ENCODE measurements at regions of chr7 and their contacts with region 1.

Region 1: GRCh38 chr7:113421696-113422330 is 303.5 kb upstream of the SMIM30 start:
- DNase-seq: peak; percentile 80 to 86
- ATAC-seq: peak; percentile 89
- H3K4me3 ChIP-seq: no peak overlapping the region
- H3K27ac ChIP-seq: no peak overlapping the region
- H3K4me1 ChIP-seq: no peaks in the 10 kb centered on the region
- H3K27me3 ChIP-seq: no peaks in the 10 kb centered on the region

Region 2: GRCh38 chr7:111741811-111742240 is 1680.0 kb before region 1 on chr7:
- intact Hi-C with region 1: loop called in 1 of 2 experiments (anchors 10 kb)
- DNase-seq: no peak
- ATAC-seq: peak; percentile 72
- H3K4me3 ChIP-seq: no peak overlapping the region
- H3K27ac ChIP-seq: no peak overlapping the region
- H3K4me1 ChIP-seq: no peaks in the 10 kb centered on the region
- H3K27me3 ChIP-seq: no peaks in the 10 kb centered on the region

Region 3: DNA sequence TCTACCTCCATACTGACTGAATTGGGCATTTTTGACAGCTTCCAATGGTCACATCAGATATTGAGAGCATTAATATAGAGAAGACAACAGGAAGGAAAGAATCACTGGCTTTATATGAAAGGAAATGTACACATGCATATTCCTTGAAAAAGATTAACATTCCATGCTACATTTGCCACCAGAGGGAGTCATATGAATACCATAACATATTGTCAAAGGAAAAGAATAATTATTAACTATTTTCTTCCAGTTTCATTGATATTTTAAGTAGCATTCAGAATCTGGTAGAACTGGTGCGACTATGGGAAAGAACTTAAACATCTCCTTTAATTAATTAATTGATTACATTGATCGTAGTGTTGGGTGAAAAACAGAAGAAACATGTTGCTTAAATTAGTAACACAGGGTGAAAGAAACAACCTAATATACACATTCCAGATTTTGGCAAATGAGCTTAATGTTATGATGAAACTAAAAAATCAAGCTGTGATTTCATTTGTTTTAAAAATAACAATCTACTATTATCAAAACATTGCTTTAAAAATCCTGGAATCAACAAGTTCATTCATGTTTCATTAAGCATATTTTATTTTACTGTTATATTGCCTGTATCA is 406.7 kb before region 1 on chr7:
- intact Hi-C with region 1: loop called (anchors 5 kb)
- DNase-seq: no peak
- ATAC-seq: no peak
- H3K4me3 ChIP-seq: no peak overlapping the region
- H3K27ac ChIP-seq: no peak overlapping the region
- H3K4me1 ChIP-seq: no peaks in the 10 kb centered on the region
- H3K27me3 ChIP-seq: no peaks in the 10 kb centered on the region

Region 4: DNA sequence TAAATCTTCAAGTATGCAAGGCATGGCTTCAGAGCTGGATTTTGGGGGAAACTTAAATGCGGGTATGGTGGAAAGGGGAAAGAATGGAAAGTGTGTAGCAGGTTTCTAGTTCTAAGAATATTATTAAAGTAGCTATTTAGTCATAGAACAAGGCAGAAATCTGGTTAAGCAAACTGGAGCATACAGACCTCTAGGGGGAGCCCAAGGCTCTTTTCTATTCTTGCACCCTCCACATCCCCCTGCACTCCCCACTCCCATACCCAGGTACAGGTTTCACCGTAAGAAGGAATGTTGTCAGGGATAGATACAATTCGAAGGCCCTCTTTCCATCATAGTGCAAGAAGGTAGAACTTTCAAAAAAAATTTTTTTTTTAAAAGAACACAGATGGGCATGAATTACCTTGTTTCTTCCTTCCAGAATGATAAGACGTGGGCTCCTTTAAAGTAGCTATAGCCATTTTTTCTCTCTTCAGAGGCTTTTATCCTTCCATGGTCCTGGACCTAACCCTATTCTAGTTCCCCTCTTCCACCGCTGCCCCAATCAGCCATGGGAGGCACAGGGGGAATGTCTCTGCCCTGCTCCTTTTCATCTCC is 262.0 kb before region 1 on chr7:
- intact Hi-C with region 1: loop called (anchors 2 to 5 kb)
- DNase-seq: no peak
- ATAC-seq: no peak
- H3K4me3 ChIP-seq: no peak overlapping the region
- H3K27ac ChIP-seq: no peak overlapping the region
- H3K4me1 ChIP-seq: no peaks in the 10 kb centered on the region
- H3K27me3 ChIP-seq: no peaks in the 10 kb centered on the region

Region 5: DNA sequence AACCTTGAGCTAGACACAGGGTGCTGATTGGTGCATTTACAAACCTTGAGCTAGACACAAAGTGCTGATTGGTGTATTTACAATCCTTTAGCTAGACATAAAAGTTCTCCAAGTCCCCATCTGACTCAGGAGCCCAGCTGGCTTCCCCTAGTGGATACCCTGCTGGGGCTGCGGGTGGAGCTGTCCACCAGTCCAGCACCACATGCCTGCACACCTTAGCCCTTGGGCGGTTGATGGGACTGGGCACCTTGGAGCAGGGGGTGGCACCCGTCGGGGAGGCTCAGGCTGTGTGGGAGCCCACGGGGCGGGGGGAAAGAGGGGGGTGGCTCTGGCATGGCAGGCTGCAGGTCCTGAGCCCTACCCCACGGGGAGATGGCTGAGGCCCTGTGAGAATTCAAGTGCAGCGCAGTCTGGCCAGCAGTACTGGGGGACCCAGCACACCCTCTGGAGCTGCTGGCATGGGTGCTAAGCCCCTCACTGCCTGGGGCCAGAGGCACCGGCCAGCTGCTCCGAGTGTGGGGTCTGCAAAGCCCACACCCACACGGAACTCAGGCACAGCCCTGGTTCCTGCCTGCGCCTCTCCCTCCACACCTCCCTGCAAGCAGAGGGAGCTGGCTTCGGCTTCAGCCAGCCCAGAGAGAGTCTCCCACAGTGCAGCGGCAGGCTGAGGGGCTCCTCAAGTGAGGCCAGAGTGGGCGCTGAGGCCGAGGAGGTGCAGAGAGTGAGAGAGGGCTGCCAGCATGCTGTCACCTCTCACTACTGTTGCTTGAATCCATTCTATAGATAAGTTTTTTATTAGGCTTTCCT is 66.3 kb after region 1 on chr7:
- intact Hi-C with region 1: no loop called
- DNase-seq: no peak
- ATAC-seq: no peak
- H3K4me3 ChIP-seq: no peak overlapping the region
- H3K27ac ChIP-seq: no peak overlapping the region
- H3K4me1 ChIP-seq: no peaks in the 10 kb centered on the region
- H3K27me3 ChIP-seq: no peaks in the 10 kb centered on the region

Region 6: GRCh38 chr7:113698556-113699220 is 276.9 kb after region 1 on chr7:
- intact Hi-C with region 1: loop called (anchors 5 kb)
- DNase-seq: no peak
- ATAC-seq: no peak
- H3K4me3 ChIP-seq: no peak overlapping the region
- H3K27ac ChIP-seq: no peak overlapping the region
- H3K4me1 ChIP-seq: no peaks in the 10 kb centered on the region
- H3K27me3 ChIP-seq: no peaks in the 10 kb centered on the region

Measured in aorta (tissue), 5 donors.